PC-9 (cell line): ENCODE measurements at regions of chr1 and their contacts with region 1.

Region 1: DNA sequence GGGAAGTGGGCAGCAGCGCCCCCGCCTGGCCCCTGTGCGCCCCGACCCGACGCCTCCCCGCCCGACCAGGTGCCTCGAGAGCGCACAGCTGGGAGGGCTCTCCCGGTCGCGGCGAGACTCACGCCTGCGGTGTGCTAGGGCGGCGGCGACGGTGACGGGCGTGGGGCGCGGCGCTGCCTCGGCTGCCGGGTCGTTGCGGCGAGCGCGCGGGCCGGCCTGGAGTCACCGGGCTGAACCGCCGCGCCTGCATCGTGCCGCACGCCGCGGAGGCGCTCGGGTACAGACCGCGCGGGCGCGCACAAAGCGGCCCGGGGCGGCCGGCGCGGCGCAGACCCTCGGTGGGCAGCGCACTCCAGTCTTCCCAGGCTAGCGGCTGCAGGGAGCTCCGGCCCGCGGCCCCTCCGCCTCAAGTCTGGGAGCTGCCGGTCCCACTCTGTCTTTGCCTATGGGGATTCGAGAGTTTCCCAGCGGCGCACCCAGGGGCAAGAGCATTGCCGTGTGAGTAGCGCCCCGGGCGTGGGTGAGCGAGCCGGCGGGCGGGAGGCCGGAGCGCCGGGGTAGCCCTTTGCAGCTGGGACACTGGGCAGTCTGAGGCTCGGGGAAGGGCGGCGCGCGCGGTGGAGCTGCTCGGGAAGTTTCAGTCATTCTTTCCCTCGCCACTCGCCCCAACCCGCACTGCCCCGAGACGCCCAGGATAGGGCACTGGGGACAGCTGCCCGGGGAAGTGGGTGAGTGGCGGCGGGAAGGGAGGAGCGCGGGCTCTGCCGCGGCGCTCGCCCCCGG is at the start of gene SLC35F3:
- DNase-seq: peak; percentile 53 to 88
- H3K4me3 ChIP-seq: peak within 1 kb of the TSS; percentile 82
- H3K27ac ChIP-seq: no peak within 1 kb of the TSS
- H3K4me1 ChIP-seq: peaks cover 17% of the 10 kb centered on the region
- H3K27me3 ChIP-seq: no peaks in the 10 kb centered on the region
- CTCF ChIP-seq: no peak
- total RNA-seq, gene SLC35F3: 6.1 and 6.4 TPM in 2 replicates

Region 2: DNA sequence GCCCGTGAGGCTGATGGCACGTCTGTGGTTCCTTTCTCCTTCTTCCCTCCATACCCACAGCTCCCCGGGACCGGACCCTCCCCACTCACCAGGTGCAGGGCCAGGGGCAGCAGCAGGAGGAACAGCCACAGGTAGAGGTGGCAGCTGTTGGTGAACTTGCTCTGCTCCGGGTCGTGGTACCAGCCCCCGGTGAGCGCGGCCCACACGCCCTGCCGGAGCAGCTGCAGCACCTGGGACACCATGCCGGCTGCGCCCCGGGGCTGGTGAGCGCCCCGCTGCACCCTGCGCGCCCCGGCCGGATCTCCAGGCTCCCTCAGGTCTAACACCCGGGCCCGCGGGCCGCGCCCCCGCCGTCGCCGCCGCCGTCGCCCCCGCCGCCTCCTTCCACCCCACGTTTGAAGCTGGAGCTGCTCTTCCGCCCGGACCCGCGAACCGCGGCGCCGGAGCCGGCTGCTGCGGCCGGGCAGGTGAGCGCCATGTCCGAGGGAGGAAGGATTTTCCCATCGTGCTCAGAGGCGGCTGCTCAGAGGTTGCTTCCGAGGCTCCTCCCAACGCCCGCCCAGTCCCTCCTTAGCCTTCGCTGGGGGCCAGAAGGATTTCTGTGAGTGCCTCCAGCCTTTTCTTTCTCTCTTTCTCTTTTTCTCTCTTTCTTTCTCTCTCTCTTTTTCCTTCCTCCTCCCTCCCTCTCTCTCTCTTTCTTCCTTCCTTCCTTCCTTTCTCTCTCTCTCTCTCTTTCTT is 609.4 kb before region 1 on chr1 and contains the start of gene PCNX2:
- CTCF ChIA-PET with region 1: no interaction called
- POLR2A ChIA-PET with region 1: no interaction called
- intact Hi-C with region 1: loop called (anchors 10 kb)
- DNase-seq: peak; percentile 71 to 73
- H3K4me3 ChIP-seq: peak within 1 kb of the TSS; percentile 82
- H3K27ac ChIP-seq: peak within 1 kb of the TSS; percentile 50
- H3K4me1 ChIP-seq: peaks cover 37% of the 10 kb centered on the region
- H3K27me3 ChIP-seq: no peaks in the 10 kb centered on the region
- CTCF ChIP-seq: no peak
- total RNA-seq, gene PCNX2: 18.6 and 20.3 TPM in 2 replicates

Region 3: GRCh38 chr1:233394860-233395717 is 509.7 kb before region 1 on chr1:
- CTCF ChIA-PET with region 1: no interaction called
- POLR2A ChIA-PET with region 1: no interaction called
- intact Hi-C with region 1: loop called (anchors 2 kb)
- DNase-seq: peak; percentile 30 to 60
- H3K4me3 ChIP-seq: no peak overlapping the region
- H3K27ac ChIP-seq: no peak overlapping the region
- H3K4me1 ChIP-seq: no peaks in the 10 kb centered on the region
- H3K27me3 ChIP-seq: no peaks in the 10 kb centered on the region
- CTCF ChIP-seq: peak; percentile 89

Region 4: DNA sequence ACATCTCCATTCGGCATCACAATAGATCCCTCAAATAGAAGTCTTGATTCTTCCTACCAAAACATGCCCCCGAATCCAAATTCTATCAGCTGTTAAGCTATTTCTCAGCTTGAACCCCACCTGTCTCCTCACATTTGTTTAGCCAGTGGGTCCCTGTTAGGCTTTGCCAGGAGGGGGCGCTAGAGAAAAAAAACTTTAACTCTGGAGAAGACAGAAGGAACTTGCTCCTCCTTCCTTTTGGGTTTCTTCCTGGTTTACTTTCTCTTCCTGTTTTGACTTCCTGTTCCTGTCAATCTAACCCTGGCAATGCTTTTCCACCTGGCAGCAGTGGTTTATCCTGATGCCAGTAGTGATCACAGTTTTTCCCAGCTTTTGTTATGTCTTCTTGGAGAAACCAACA is 386.5 kb before region 1 on chr1:
- CTCF ChIA-PET with region 1: no interaction called
- POLR2A ChIA-PET with region 1: no interaction called
- intact Hi-C with region 1: loop called (anchors 2 kb)
- DNase-seq: peak; percentile 25 to 50
- H3K4me3 ChIP-seq: no peak overlapping the region
- H3K27ac ChIP-seq: no peak overlapping the region
- H3K4me1 ChIP-seq: peaks cover 16% of the 10 kb centered on the region
- H3K27me3 ChIP-seq: no peaks in the 10 kb centered on the region
- CTCF ChIP-seq: peak; percentile 81

Region 5: GRCh38 chr1:233656032-233656620 is 248.7 kb before region 1 on chr1:
- CTCF ChIA-PET with region 1: interaction called, 3 read pairs
- POLR2A ChIA-PET with region 1: no interaction called
- intact Hi-C with region 1: loop called (anchors 10 kb)
- DNase-seq: peak; percentile 17 to 46
- H3K4me3 ChIP-seq: peak overlapping the region; percentile 37; the same call in 1 of the 2 replicates
- H3K27ac ChIP-seq: peak overlapping the region; percentile 96
- H3K4me1 ChIP-seq: peaks cover 75% of the 10 kb centered on the region
- H3K27me3 ChIP-seq: no peaks in the 10 kb centered on the region
- CTCF ChIP-seq: no peak

Region 6: DNA sequence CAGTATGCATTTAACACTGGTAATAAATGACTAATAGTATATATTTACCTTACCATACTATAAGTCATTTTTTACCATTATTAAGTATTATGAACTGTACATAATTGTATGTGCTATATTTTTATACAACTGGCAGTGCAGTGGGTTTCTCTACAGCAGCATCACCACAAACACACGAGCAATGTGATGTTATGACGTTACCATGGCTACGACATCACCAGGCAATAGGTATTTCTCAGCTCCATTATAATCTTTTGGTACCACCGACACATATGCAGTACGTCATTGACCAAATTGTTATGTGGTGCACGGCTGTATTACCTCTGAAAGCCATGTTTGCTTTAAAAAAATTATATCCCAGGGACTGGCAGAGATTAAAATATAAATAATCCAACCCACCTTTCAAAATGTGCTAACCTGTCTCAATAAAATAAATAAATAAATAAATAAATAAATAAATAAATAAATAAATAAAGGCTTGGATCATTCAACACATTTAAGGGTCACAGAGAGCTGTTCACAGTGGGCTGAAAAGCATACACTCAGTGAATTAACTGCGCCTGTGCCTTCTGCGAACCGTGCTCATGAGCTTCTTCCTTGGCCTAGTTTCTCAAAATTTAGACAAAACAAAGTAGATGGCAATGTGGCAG is 121.8 kb before region 1 on chr1:
- CTCF ChIA-PET with region 1: no interaction called
- POLR2A ChIA-PET with region 1: no interaction called
- intact Hi-C with region 1: no loop called
- DNase-seq: no peak
- H3K4me3 ChIP-seq: no peak overlapping the region
- H3K27ac ChIP-seq: no peak overlapping the region
- H3K4me1 ChIP-seq: no peaks in the 10 kb centered on the region
- H3K27me3 ChIP-seq: no peaks in the 10 kb centered on the region
- CTCF ChIP-seq: no peak

Region 7: DNA sequence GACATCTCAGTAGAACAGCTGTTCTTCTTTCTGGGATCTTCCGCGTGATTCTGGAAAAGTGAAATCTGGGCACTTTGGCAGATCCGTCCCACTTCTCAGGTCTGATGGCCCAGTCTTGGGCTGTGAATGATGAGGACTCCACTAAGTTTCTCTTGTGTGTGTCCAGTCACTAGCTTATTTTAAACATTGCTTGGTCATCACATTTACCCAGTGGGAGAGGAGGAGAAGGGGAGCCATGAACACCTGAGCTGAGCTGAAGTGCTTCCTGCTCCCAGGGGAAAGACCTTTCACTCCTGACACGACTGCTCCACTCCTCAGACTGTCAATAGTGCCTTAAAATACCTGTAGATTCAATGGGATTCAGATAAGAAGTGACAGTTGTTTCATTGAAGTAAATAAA is 102.2 kb before region 1 on chr1:
- CTCF ChIA-PET with region 1: no interaction called
- POLR2A ChIA-PET with region 1: no interaction called
- intact Hi-C with region 1: loop called (anchors 5 kb)
- DNase-seq: no peak
- H3K4me3 ChIP-seq: no peak overlapping the region
- H3K27ac ChIP-seq: no peak overlapping the region
- H3K4me1 ChIP-seq: no peaks in the 10 kb centered on the region
- H3K27me3 ChIP-seq: no peaks in the 10 kb centered on the region
- CTCF ChIP-seq: no peak

Region 8: DNA sequence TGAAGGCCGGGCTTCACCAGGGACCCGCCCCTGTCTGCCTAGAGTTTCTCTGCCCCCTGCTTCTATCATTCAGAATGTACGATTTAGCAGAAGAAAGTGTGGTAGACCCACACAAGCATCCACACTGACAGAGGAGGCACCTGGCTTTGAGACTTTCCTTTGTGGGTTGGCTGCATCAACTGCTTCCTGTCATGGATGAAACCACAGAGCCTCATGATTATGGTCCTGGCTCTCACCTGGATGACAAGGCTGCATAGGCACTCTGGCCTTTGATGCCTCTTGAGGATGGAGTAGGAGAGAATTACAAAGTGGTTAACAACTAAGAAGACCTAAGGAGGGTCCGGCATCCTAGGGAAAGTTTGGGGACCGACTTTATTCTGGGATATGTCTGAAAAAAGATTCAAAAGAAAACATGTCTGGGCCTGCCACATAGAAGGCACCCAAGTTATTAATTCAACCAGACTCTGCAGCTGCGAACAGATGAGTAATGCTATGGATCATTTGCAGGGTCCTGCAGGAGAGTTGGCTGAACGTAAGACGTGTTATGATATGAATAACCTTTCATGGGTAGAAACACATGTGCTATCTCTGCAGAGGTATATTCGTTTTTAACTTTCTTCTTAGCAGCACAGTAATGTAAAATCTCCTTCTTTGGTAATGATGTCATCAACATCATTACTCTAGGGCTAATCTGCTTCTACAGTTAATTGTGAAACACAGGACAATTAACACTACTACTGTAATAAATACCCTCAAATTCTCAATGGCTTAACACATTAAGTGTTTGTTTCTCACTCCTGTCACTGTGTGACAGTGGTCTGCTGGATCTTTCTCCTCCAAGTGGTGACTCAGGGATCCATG is 135.9 kb after region 1 on chr1:
- CTCF ChIA-PET with region 1: no interaction called
- POLR2A ChIA-PET with region 1: no interaction called
- intact Hi-C with region 1: no loop called
- DNase-seq: no peak
- H3K4me3 ChIP-seq: no peak overlapping the region
- H3K27ac ChIP-seq: no peak overlapping the region
- H3K4me1 ChIP-seq: no peaks in the 10 kb centered on the region
- H3K27me3 ChIP-seq: no peaks in the 10 kb centered on the region
- CTCF ChIP-seq: no peak

Region 9: DNA sequence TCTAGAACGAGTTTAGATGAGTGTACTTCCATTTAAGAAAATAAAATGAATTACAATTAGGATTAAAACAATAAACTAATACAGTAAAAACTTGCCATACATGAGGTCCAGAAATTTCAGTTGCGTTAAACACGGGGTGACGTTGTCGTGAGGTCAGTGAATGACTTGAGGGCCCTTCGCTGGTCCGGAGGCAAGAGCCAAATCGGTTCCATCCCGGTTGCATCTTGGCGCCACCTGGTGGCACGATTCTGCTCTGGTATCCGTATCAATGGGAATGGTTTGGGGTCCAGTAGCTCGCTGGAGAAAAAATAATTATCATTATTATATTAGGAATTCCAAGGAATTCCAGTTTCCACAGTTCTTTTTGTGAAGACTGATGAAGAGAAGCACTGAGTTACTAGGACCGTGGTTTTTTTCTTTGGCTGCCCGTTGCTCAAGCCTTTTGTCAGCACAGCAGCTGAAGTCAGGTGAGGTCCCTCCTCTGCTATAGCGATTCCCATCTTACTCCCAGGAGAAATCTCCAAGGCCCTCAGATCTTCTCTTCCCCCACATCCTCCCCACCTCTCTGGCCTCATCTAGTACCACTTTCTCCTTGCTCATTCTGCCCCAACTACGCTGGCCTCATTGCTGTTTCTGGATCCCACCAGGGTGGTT is 161.1 kb after region 1 on chr1:
- CTCF ChIA-PET with region 1: interaction called, 5 read pairs
- POLR2A ChIA-PET with region 1: no interaction called
- intact Hi-C with region 1: loop called (anchors 5 kb)
- DNase-seq: peak in 1 of 2 experiments; percentile 75
- H3K4me3 ChIP-seq: no peak overlapping the region
- H3K27ac ChIP-seq: no peak overlapping the region
- H3K4me1 ChIP-seq: no peaks in the 10 kb centered on the region
- H3K27me3 ChIP-seq: no peaks in the 10 kb centered on the region
- CTCF ChIP-seq: peak; percentile 83